Posterior vena cava (tissue), 2 donors: ENCODE measurements at regions of chr12 and their contacts with region 1.

Region 1: GRCh38 chr12:111040690-111041089 is 120.3 kb upstream of the MYL2 start:
- DNase-seq: no peak

Region 2: GRCh38 chr12:110048242-110049027 is 992.3 kb before region 1 on chr12 and contains the start of gene C12orf76:
- intact Hi-C with region 1: no loop called
- DNase-seq: peak; percentile 98
- total RNA-seq, gene C12orf76: 6.7 to 9.2 TPM

Region 3: DNA sequence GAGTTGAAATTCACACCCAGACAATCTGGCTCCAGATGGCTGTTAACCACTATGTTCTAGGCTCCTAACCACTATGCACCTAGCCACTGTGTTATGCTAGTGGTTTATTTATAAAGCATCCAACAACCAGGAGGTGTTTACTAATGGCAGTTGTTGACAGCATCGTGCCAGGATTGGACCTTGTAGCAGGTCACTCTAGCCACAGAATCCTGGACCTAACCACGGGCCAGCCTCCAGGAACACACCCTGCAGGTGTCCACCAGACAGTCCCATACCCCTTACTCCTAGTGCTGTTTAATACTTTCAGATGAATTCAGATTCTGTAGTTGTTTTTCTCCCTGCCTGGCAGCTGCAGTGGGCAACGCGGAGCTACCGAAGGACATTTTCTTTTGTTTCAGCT is 11.0 kb before region 1 on chr12:
- intact Hi-C with region 1: loop called in 1 of 2 experiments (anchors 1 kb)
- DNase-seq: no peak

Region 4: GRCh38 chr12:111063295-111064026 is 22.8 kb after region 1 on chr12:
- intact Hi-C with region 1: no loop called
- DNase-seq: no peak

Region 5: GRCh38 chr12:111428728-111429175 is 388.1 kb after region 1 on chr12:
- intact Hi-C with region 1: no loop called
- DNase-seq: peak; percentile 89